GM12878 (cell line): ENCODE measurements at regions of chr9 and their contacts with region 1.

Region 1: DNA sequence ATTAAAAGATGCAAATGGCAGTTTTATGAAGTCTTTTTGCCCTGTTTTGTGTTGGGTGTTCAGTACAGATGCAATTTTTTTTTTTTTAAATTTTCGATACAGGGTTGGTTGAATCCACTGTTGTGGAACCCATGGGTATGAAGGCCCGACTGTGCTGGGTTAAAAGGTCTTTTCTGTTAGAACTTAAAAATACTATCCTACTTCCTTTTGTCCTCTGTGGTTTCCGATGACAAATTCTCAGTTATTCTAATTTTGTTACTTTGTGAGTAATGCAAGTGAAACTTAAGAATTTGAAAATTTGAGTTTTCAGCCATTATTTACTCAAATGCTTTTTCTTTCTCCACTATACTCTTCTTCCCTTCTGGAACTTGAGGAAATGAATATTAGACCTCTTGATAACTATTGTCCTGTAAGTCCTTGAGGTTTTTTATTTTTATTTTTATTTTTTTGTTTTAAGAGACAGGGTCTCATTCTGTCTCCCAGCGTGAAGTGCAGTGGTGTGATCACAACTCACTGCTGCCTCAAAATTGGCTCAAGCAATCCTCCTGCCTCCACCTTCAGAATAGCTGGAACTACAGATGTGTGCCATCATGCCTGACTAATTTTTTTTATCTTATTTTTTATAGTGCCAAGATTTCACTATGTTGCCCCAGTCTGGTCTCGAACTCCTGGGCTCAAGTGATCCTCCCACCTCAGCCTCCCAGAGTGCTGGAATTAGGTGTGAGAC is 67.5 kb downstream of the ZCCHC7 start:
- DNase-seq: peak; percentile 75
- ATAC-seq: peak; percentile 81
- H3K4me3 ChIP-seq: peak overlapping the region; percentile 61
- H3K27ac ChIP-seq: peak overlapping the region; percentile 83
- H3K4me1 ChIP-seq: peaks cover 47% of the 10 kb centered on the region
- H3K27me3 ChIP-seq: no peaks in the 10 kb centered on the region
- CTCF ChIP-seq: no peak
- EP300 ChIP-seq: peak; percentile 31 to 66; a peak in 2 of 4 replicates
- POLR2A ChIP-seq: no peak
- RAD21 ChIP-seq: no peak

Region 2: DNA sequence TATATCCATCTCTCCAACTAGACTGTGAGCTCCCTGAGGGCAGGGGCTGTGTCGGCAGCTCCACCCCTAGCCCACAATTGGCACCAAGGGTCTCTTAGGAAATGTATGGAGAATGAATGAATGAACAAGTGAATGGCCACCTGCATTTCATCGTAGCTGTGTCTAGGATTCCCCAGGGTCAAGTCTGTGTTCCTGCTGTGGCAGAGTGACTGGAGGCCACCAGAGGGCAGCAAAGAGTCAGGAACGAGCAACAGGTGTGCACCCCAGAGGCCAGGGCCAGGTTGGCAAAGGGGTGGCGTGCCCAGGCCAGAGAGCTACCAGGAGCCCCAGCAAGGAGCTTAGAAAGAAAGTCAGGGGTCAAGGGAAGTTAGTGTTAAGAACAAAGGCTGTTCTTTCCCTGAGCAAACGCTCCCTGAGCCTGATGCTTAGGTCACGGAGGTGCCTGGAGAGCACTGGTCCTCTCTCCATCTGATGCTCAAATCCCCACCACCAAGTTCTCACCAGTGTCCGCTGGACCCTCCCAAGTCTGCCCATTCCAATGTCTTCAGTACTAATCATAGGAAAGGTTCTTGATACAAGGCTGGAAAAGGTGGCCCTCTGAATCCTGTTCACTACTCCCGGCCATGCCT is 314.5 kb before region 1 on chr9:
- CTCF ChIA-PET with region 1: interaction called, 3 read pairs
- POLR2A ChIA-PET with region 1: no interaction called
- RAD21 ChIA-PET with region 1: interaction called, 3 read pairs
- SMC1A ChIA-PET with region 1: interaction called, 10 read pairs
- in situ Hi-C with region 1: no loop called
- intact Hi-C with region 1: no loop called
- DNase-seq: peak; percentile 28
- ATAC-seq: peak; percentile 95
- H3K4me3 ChIP-seq: no peak overlapping the region
- H3K27ac ChIP-seq: no peak overlapping the region
- H3K4me1 ChIP-seq: peaks cover 27% of the 10 kb centered on the region
- H3K27me3 ChIP-seq: no peaks in the 10 kb centered on the region
- CTCF ChIP-seq: peak; percentile 86 to 91 (median 89); a peak in 5 of 6 replicates
- EP300 ChIP-seq: no peak
- POLR2A ChIP-seq: no peak
- RAD21 ChIP-seq: peak; percentile 86

Region 3: GRCh38 chr9:37027582-37028419 is 160.1 kb before region 1 on chr9:
- CTCF ChIA-PET with region 1: interaction called, 13 read pairs
- POLR2A ChIA-PET with region 1: interaction called, 4 read pairs
- RAD21 ChIA-PET with region 1: interaction called, 5 read pairs
- SMC1A ChIA-PET with region 1: interaction called, 6 read pairs
- in situ Hi-C with region 1: no loop called
- intact Hi-C with region 1: no loop called
- DNase-seq: peak; percentile 85
- ATAC-seq: peak; percentile 78
- H3K4me3 ChIP-seq: peak overlapping the region; percentile 96
- H3K27ac ChIP-seq: peak overlapping the region; percentile 88
- H3K4me1 ChIP-seq: peaks cover 20% of the 10 kb centered on the region
- H3K27me3 ChIP-seq: no peaks in the 10 kb centered on the region
- CTCF ChIP-seq: no peak
- EP300 ChIP-seq: no peak
- POLR2A ChIP-seq: no peak
- RAD21 ChIP-seq: no peak

Region 4: DNA sequence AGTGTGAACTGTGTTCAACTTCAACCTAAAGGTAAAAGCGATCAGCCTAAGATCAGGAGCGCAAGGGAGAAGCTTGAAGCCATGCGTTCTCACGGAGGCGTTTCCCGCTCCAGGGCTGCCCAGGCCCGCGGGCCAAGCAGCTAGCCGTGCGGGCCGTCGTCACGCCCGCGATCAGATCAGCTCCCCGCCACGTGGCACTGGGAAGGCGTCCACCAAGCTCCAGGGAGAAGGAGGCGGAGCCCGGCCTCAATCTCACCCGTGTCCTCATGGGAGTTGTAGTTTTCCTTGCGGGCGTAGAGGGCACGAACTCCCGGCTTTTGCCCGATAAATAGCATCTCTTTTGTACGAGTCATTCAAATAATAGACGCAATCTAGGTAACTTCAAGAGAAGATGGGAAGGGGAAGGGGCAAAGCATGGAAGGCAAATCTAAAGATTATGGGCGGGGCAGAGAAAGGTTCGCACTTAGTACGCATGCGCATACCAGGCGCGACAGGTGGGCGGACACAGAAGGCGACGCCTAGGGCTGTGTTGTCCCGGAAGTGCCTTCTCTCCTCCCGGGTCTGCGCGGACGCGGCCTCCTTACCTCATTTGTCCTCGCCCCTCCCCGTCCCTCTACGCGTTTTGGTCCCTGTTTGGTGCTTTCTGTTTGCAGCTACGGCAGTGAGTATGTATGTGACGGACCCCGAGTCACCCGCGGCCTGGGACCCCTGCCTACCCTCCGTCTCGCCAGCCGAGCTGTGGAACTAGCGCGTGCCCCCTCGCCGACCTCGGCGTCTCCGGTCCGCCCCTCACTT is 108.3 kb before region 1 on chr9:
- CTCF ChIA-PET with region 1: interaction called, 4 read pairs
- POLR2A ChIA-PET with region 1: interaction called, 5 read pairs
- RAD21 ChIA-PET with region 1: interaction called, 8 read pairs
- SMC1A ChIA-PET with region 1: interaction called, 4 read pairs
- in situ Hi-C with region 1: no loop called
- intact Hi-C with region 1: loop called (anchors 5 kb)
- DNase-seq: peak; percentile 93
- ATAC-seq: peak; percentile 93
- H3K4me3 ChIP-seq: peak overlapping the region; percentile 84
- H3K27ac ChIP-seq: peak overlapping the region; percentile 87
- H3K4me1 ChIP-seq: peaks cover 20% of the 10 kb centered on the region
- H3K27me3 ChIP-seq: no peaks in the 10 kb centered on the region
- CTCF ChIP-seq: no peak
- EP300 ChIP-seq: no peak
- POLR2A ChIP-seq: peak; percentile 89
- RAD21 ChIP-seq: no peak

Region 5: DNA sequence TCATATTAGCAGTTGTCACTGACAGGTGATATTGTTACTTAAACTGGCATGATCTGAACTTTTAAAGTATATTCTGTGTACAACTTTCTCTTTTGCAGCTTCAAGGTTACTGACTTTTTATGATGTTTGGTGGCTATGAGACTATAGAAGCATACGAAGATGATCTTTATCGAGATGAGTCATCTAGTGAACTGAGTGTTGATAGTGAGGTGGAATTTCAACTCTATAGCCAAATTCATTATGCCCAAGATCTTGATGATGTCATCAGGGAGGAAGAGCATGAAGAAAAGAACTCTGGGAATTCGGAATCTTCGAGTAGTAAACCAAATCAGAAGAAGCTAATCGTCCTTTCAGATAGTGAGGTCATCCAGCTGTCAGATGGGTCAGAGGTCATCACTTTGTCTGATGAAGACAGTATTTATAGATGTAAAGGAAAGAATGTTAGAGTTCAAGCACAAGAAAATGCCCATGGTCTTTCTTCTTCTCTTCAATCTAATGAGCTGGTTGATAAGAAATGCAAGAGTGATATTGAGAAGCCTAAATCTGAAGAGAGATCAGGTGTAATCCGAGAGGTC is 61.6 kb before region 1 on chr9:
- CTCF ChIA-PET with region 1: interaction called, 4 read pairs
- POLR2A ChIA-PET with region 1: interaction called, 6 read pairs
- RAD21 ChIA-PET with region 1: interaction called, 16 read pairs
- SMC1A ChIA-PET with region 1: interaction called, 15 read pairs
- in situ Hi-C with region 1: no loop called
- intact Hi-C with region 1: loop called (anchors 2 kb)
- DNase-seq: no peak
- ATAC-seq: peak; percentile 12; the same call in 2 of the 3 replicates
- H3K4me3 ChIP-seq: no peak overlapping the region
- H3K27ac ChIP-seq: no peak overlapping the region; the same call in 1 of the 2 replicates
- H3K4me1 ChIP-seq: peaks cover 21% of the 10 kb centered on the region
- H3K27me3 ChIP-seq: no peaks in the 10 kb centered on the region
- CTCF ChIP-seq: no peak
- EP300 ChIP-seq: no peak
- POLR2A ChIP-seq: no peak
- RAD21 ChIP-seq: no peak

Region 6: DNA sequence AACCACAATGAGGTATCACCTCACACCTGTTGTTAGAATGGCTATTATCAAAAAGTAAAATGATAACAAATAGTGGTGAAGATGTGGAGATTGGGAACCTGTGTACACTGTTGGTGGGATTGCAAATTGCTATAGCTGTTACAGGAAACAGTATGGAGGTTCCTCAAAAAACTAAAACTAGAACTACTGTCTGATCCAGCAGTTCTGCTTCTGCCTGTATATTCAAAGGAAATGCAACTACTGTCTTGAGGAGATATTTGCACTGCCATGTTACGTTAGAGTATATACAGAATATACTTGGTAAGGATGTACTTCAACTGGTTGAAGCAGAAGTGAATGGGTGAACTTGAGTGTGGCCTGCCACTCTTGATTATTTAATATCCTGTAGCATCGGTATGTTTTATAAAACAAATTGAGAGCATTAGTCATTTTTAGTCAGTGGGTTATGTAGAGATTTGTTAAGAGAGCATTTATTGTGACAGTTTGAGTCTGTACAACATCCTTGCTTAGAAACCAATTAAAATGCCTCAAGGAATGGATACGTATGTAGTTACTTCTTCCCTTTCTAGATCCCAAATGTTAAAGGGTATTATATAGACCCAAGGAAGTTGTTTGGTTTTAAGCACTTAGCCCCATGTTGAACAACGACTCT is 30.0 kb before region 1 on chr9:
- CTCF ChIA-PET with region 1: no interaction called
- POLR2A ChIA-PET with region 1: no interaction called
- RAD21 ChIA-PET with region 1: no interaction called
- SMC1A ChIA-PET with region 1: no interaction called
- in situ Hi-C with region 1: no loop called
- intact Hi-C with region 1: no loop called
- DNase-seq: no peak
- ATAC-seq: peak; percentile 28
- H3K4me3 ChIP-seq: no peak overlapping the region
- H3K27ac ChIP-seq: no peak overlapping the region
- H3K4me1 ChIP-seq: peaks cover 13% of the 10 kb centered on the region
- H3K27me3 ChIP-seq: no peaks in the 10 kb centered on the region
- CTCF ChIP-seq: no peak
- EP300 ChIP-seq: no peak
- POLR2A ChIP-seq: no peak
- RAD21 ChIP-seq: no peak

Region 7: DNA sequence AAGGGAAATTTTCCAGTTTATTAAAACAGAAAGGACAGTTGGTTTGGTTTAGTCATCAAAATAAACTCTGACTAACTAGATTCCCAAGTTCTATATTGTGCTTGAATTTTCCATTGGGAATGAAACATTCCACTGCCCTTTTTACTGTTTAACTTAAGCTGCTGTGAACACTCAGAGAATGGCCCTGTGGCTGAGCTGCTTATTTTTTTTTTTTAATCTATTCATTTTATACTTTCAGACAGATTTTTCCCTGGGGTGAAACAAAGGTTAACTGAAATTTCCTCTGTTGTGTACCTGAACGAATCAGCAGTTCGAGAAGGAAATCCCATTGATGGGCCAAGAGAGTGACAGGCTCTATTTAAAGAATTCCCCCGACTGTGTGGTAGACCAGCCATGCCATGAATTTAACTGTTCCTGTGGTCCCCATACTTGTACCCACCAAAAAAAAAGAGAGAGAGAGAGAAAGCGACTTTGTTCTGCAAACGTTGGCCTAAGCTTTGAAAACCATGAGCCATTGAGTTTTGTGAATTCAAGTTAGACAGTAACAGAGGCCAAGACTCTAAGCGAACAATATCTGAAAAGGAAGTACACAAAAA is 96.0 kb after region 1 on chr9:
- CTCF ChIA-PET with region 1: interaction called, 6 read pairs
- POLR2A ChIA-PET with region 1: interaction called, 3 read pairs
- RAD21 ChIA-PET with region 1: interaction called, 5 read pairs
- SMC1A ChIA-PET with region 1: interaction called, 13 read pairs
- in situ Hi-C with region 1: no loop called
- intact Hi-C with region 1: no loop called
- DNase-seq: peak; percentile 72
- ATAC-seq: peak; percentile 63
- H3K4me3 ChIP-seq: peak overlapping the region; percentile 57
- H3K27ac ChIP-seq: peak overlapping the region; percentile 84
- H3K4me1 ChIP-seq: peaks cover 13% of the 10 kb centered on the region
- H3K27me3 ChIP-seq: no peaks in the 10 kb centered on the region
- CTCF ChIP-seq: no peak
- EP300 ChIP-seq: 0 out of 4 replicates have a peak, but pooled peaks of 1 of the 2 experiments have one; percentile 37
- POLR2A ChIP-seq: no peak
- RAD21 ChIP-seq: no peak

Region 8: DNA sequence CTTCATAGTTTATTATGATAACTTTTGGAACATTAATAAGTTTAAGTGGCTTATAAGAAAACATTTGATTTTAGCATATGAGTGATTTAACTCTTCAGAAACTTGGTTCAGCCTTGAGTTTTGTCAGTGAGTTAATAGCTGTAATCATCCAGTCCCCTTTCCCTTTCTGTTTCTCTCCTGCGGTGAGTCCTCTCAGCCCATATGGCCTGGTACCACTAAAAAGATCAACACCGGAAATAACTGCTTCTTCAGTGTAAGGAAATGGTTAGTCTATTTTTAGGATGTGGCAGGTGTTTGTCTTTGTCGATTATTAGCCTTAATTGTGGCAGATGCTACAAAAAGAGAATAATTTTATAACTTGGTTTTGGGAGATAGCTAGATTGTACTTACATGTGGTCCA is 114.4 kb after region 1 on chr9:
- CTCF ChIA-PET with region 1: interaction called, 7 read pairs
- POLR2A ChIA-PET with region 1: interaction called, 8 read pairs
- RAD21 ChIA-PET with region 1: interaction called, 32 read pairs
- SMC1A ChIA-PET with region 1: interaction called, 46 read pairs
- in situ Hi-C with region 1: no loop called
- intact Hi-C with region 1: no loop called
- DNase-seq: peak; percentile 90
- ATAC-seq: peak; percentile 91
- H3K4me3 ChIP-seq: peak overlapping the region; percentile 43; the same call in 1 of the 2 replicates
- H3K27ac ChIP-seq: peak overlapping the region; percentile 95
- H3K4me1 ChIP-seq: peaks cover 48% of the 10 kb centered on the region
- H3K27me3 ChIP-seq: no peaks in the 10 kb centered on the region
- CTCF ChIP-seq: no peak
- EP300 ChIP-seq: peak; percentile 82 to 93
- POLR2A ChIP-seq: no peak
- RAD21 ChIP-seq: peak; percentile 31; the same call in 1 of the 2 replicates